ENCODE measurements at regions of chr2 and their contacts with region 1.

Region 1: DNA sequence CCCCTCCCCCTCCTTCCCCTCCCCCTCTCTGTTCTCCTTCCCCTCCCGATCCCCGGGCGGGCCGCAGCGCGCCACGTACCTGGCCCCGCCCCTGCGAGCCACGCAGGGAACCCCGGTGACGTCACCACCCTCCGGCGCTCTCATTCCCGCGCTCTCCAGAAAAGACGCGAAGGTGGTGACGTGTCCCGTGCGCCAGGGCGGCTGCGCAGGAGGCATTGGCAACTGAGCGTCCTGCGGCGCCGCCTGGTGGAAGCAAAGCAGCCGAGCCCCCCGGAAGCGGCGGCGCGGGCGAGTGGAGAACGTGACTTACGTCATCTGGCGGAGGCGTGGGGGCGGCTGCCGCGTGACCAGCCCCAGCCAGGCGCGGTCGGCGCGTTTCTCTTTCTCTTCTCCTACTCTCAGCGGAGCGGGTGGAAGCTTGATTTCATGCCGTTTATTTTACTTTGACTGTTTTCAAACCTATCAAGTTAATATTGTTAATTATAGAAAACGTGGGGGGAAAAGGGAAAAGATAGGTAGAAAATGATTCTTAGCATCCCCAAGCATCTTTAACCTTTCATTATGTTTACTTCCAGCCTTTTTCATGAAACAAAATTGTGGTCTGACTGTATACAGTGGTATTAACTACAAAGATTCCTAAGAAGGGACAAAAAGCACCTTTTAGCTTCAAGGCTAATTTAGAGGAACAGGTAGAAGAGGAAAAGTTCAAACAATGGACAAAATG is 48.1 kb downstream of the C2orf42 start:
- DNase-seq: peak; percentile 100
- H3K4me3 ChIP-seq: peak overlapping the region; percentile 40 to 81 (median 47)
- H3K27ac ChIP-seq: peak overlapping the region; percentile 95
- H3K4me1 ChIP-seq: peaks cover 14% of the 10 kb centered on the region
- H3K27me3 ChIP-seq: no peaks in the 10 kb centered on the region
- CTCF ChIP-seq: peak; percentile 97 to 98
- POLR2A ChIP-seq: no peak

Region 2: GRCh38 chr2:70070541-70071268 is 72.0 kb before region 1 on chr2:
- CTCF ChIA-PET with region 1: interaction called, 11 read pairs
- POLR2A ChIA-PET with region 1: no interaction called
- dilution Hi-C with region 1: no loop called
- intact Hi-C with region 1: no loop called
- DNase-seq: peak; percentile 88
- H3K4me3 ChIP-seq: no peak overlapping the region
- H3K27ac ChIP-seq: no peak overlapping the region
- H3K4me1 ChIP-seq: peaks cover 3% of the 10 kb centered on the region
- H3K27me3 ChIP-seq: no peaks in the 10 kb centered on the region
- CTCF ChIP-seq: peak; percentile 75 to 81
- POLR2A ChIP-seq: no peak

Region 3: GRCh38 chr2:70124983-70125480 is 17.7 kb before region 1 on chr2:
- CTCF ChIA-PET with region 1: interaction called, 3 read pairs
- POLR2A ChIA-PET with region 1: interaction called, 5 read pairs
- dilution Hi-C with region 1: no loop called
- intact Hi-C with region 1: loop called (anchors 1 kb)
- DNase-seq: peak; percentile 59
- H3K4me3 ChIP-seq: peak overlapping the region; percentile 28 to 62 (median 55)
- H3K27ac ChIP-seq: peak overlapping the region; percentile 79
- H3K4me1 ChIP-seq: peaks cover 9% of the 10 kb centered on the region
- H3K27me3 ChIP-seq: no peaks in the 10 kb centered on the region
- CTCF ChIP-seq: no peak
- POLR2A ChIP-seq: peak; percentile 77

Region 4: DNA sequence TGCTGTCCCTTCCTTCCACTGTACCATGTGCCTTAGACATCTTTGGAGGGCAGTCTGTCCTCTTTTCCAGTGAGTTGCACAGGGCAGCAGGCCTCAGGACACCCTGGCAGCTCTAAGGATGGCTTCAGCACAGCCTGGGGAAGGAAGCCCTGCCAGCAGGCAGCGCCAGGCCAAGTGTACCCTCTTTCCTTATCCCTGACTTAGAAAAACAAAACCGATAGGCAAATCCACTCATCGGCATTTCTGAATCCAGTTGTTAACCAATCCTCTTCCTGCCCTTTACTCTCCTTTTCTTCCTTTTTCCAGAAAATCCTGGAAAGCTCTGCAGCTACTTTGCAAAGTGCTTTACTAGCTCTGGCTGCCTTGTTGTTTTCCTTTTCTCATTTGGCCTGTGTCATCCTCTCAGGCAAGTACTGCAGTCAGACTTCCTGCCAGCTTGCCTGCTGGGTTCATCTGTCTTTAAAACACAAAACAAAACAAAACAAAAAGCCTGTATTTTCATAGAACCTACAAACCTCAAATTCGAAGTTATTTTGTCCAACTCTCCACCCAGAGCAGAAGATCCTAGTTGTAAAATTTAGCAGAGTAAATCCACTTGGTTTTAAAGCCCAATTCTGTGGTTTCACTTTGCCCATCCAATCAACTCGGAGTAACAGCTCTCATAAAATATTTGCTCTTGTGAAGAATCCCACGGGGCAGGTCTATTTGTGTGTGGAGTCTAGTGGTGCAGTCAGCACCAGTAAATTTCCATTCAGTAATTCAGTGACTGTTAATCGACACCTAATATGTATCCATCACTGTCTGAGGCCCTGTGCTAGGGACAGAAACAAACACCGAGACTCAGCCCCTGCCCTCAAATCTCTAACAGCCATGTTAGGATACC is 10.3 kb before region 1 on chr2:
- CTCF ChIA-PET with region 1: interaction called, 9 read pairs
- POLR2A ChIA-PET with region 1: interaction called, 9 read pairs
- dilution Hi-C with region 1: no loop called
- intact Hi-C with region 1: loop called (anchors 1 kb)
- DNase-seq: peak; percentile 87
- H3K4me3 ChIP-seq: peak overlapping the region in 1 of 3 experiments; percentile 38
- H3K27ac ChIP-seq: peak overlapping the region; percentile 69
- H3K4me1 ChIP-seq: peaks cover 40% of the 10 kb centered on the region
- H3K27me3 ChIP-seq: no peaks in the 10 kb centered on the region
- CTCF ChIP-seq: no peak
- POLR2A ChIP-seq: peak; percentile 23

Region 5: DNA sequence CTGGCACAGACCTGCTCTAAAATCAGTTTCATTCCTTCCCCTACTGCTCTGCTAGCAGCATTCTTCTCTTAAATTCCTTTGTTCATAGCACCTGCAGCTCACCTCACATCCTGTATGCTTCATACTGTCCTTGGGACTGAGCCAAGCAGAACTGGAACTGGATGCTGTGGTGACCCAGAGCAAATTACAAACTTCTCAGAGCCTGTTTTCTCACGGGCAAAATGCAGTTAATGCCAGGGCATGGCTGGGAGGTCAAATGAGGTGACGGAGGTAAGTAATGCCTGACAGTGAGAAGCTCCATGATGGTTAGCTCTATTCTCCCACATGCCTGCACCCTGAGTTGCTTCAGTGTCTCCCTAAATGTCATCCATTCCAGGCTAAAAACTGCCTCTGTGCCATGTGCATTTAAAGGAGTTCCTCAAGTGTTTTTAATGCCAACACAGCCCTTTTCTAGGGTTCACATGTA is 18.4 kb after region 1 on chr2:
- CTCF ChIA-PET with region 1: no interaction called
- POLR2A ChIA-PET with region 1: no interaction called
- dilution Hi-C with region 1: no loop called
- intact Hi-C with region 1: no loop called
- DNase-seq: no peak
- H3K4me3 ChIP-seq: no peak overlapping the region
- H3K27ac ChIP-seq: no peak overlapping the region
- H3K4me1 ChIP-seq: no peaks in the 10 kb centered on the region
- H3K27me3 ChIP-seq: no peaks in the 10 kb centered on the region
- CTCF ChIP-seq: no peak
- POLR2A ChIP-seq: no peak

Region 6: GRCh38 chr2:70248181-70248847 is 105.6 kb after region 1 on chr2 and contains the start of gene TIA1:
- CTCF ChIA-PET with region 1: no interaction called
- POLR2A ChIA-PET with region 1: no interaction called
- dilution Hi-C with region 1: no loop called
- intact Hi-C with region 1: loop called (anchors 2 kb)
- DNase-seq: peak; percentile 99
- H3K4me3 ChIP-seq: peak within 1 kb of the TSS; percentile 75 to 100 (median 97)
- H3K27ac ChIP-seq: peak within 1 kb of the TSS; percentile 82
- H3K4me1 ChIP-seq: peaks cover 23% of the 10 kb centered on the region
- H3K27me3 ChIP-seq: no peaks in the 10 kb centered on the region
- CTCF ChIP-seq: no peak
- POLR2A ChIP-seq: peak; percentile 96
- total RNA-seq, gene TIA1: 140 and 163 TPM in 2 replicates